ENCODE measurements at regions of chr19 and their contacts with region 1.

Region 1: DNA sequence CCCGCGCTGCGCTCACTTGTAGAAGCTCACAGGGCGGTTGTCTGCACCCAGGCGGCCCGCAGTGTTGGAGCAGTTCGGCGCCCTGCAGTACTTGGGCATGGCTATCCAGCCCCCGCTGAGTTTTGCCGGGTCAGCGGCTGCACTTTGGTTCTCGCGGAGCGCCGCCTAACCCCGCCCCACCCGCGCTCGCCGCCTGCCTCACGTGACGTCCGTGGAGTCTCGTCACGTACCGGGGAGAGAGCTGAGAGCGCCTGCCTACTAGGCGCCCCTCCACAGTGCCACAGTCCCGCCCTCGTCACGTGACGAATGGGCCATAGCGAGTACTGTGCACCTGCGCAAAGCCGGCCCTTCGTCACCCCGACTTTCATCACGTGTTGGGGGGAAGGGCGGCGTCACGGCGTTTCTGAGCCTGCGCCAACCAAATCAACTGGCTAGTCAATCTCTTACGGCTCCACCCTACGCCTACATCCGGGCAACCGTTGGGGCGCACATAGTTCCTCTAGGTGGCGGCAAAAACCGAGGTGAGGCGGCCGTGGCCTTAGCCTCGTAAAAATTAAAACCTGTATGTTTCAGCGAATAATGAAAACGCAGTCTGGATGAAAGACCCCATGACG is at the start of gene THAP8:
- DNase-seq: peak; percentile 95
- ATAC-seq: peak; percentile 83
- H3K4me3 ChIP-seq: peak within 1 kb of the TSS; percentile 90
- H3K27ac ChIP-seq: peak within 1 kb of the TSS; percentile 88
- H3K4me1 ChIP-seq: peaks cover 9% of the 10 kb centered on the region
- H3K27me3 ChIP-seq: no peaks in the 10 kb centered on the region
- CTCF ChIP-seq: peak; percentile 39; the same call in 1 of the 2 replicates
- total RNA-seq, gene THAP8: 0.95 and 2.1 TPM in 2 replicates

Region 2: DNA sequence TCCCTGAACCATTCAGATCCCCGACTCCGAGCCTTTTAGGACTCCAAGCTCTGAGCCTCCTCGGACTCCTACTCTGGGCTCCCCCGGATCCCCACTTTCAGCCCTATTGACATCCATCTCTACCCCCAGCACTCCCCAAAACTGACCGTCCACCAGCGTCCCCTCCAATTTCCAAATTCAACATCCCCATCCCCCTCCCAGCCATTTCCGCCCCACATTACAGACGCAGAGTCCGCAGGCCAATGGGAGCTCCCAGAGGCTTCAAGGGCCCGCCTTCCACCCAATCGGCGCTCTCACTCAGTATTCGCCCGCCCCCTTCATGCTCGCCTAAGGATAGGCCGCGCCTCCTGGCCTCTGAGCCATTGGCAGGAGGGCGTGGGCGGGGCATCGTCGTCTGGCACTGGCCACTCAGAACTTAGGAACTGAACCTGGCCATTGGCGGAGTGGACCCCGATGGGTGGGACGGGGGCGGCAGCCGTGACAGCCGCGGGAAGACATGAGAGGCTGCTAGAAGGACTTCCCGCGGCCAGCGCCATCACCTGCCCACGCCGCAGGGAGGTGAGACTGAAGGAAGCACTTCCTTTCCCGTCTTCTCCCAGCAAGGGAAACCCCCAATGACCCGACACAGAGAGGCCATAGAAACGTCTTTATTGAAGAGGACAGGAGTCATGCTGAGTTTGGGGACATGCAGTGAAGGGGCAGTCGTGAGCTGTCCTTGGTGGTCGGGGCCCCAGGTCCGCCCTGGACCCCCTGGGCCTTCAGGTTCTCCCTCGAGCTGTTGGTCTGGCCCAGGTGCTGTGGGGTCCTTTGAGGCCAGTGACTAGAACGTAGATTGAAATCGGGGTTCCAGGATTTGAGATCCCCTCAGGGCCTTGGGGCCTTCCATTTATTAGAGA is 39.9 kb before region 1 on chr19 and contains the start of gene ALKBH6:
- CTCF ChIA-PET with region 1: interaction called, 3 read pairs
- POLR2A ChIA-PET with region 1: no interaction called
- intact Hi-C with region 1: loop called (anchors 5 kb)
- DNase-seq: peak; percentile 98
- ATAC-seq: peak; percentile 98
- H3K4me3 ChIP-seq: peak within 1 kb of the TSS; percentile 96
- H3K27ac ChIP-seq: no peak within 1 kb of the TSS
- H3K4me1 ChIP-seq: peaks cover 11% of the 10 kb centered on the region
- H3K27me3 ChIP-seq: no peaks in the 10 kb centered on the region
- CTCF ChIP-seq: no peak
- total RNA-seq, gene ALKBH6: 38.4 and 39.3 TPM in 2 replicates